Left cardiac atrium (tissue), 4 donors: ENCODE measurements at regions of chr14 and their contacts with region 1.

Region 1: DNA sequence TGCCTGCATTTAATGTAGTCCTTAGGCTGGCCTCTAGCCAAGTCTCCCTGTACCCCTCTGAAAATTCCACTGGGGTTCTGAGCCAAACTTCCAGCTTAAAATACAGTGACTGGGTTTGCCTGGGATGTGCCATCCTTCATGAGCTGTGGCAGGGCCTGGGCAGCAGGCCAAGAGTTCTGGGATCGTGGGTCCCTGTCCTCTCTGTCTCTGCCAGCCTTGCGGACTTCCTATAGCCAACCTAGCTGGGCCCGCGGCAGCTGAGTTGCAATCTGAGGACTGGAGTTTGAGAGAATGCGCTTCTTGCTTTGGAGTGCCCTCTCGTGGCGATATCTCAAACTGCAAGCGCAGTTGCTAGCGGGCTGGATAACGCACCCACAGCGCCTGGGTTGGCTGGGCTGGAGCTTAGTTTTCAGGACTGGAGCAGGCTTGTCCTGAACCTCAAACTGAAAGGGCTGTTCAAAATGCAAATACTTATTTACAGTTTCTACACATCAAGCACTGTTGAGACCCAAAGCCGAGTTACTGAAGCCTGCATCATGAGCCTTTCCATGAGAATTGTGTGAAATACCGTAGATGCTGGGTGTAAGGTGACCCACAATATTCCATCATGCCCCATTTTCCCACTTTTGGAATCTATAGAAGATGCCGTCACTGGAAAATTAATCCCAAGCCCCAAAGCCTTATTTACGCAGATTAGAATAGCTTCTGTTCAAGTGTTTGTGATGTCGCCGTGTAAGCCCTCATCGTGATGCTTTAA is 7.3 kb upstream of the IFI27L2 start:
- DNase-seq: peak; percentile 90
- ATAC-seq: peak; percentile 93 to 96

Region 2: DNA sequence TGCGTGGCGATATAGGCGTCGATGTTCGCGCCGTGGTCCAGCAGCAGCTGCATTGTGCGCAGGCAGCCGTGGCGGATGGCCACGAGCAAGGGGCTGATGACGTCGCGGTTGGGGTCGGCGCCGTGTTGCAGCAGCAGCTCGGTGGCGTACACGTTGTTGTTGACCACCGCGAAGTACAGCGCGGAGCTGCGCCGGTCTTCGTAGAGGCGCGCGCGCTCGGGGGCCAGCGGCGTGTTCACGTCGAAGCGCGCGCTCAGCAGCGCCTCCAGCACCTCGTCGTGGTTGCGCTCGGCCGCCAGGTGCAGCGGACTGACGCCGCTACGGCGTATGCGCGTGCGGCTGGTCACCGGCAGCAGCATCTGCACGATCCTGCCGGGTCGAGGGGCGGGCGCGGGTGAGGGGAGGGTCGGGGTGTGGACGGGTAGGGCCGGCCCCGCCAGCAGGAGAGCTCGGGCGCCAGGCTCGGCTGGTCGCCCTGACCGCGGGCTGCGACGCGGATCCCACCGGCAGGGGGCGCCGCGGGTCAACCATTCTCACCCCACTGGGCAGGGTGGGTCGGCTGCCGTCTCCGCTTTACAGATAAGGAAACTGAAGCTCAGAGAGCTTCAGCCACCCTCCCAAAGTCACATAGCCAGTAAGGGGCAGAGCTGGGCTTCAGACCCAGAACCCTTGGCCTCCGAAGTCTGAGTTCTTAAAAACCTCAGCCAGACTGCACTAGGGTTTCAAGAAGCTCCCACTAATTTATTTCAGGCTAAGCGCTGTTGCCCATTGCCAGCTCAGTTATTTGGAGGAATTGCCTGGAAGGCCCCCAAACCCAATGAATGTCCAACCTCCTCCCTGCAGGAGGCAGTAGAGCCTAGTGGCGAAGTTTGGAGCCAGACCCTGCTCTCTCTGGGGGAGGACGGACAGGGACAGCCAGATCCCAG is 197.2 kb before region 1 on chr14:
- intact Hi-C with region 1: loop called in 1 of 2 experiments (anchors 10 kb)
- DNase-seq: peak; percentile 78
- ATAC-seq: peak; percentile 83 to 85

Region 3: GRCh38 chr14:94036313-94037050 is 100.3 kb before region 1 on chr14:
- intact Hi-C with region 1: loop called (anchors 1 to 5 kb)
- DNase-seq: peak; percentile 73
- ATAC-seq: peak; percentile 90 to 92

Region 4: DNA sequence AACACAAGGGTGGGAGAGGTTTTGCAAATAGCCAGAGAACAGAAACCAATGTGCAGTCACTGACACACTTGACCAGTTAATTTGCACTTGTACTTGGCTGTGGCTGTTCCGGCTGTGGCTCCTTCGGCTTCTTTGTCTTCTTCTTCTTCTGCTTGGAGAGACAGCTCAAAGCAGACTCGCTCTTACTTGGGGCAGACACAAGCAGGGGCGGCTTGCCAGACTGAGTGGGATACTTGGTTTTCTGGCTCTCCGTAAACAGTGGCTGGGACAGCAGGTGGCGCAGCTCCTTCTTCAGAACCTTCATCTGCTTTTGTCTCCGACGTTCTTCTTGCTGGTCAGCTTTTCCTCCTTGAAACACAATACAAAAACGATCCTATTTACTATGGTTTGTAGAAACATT is 85.6 kb before region 1 on chr14:
- intact Hi-C with region 1: loop called in 1 of 2 experiments (anchors 2 kb)
- DNase-seq: peak; percentile 58
- ATAC-seq: peak; percentile 38 to 45

Region 5: GRCh38 chr14:94173885-94174603 is 37.3 kb after region 1 on chr14 and contains the start of gene PPP4R4:
- intact Hi-C with region 1: loop called in 1 of 2 experiments (anchors 5 kb)
- DNase-seq: peak; percentile 89
- ATAC-seq: peak; percentile 95 to 97
- total RNA-seq, gene PPP4R4: 0.18 to 0.29 TPM

Region 6: DNA sequence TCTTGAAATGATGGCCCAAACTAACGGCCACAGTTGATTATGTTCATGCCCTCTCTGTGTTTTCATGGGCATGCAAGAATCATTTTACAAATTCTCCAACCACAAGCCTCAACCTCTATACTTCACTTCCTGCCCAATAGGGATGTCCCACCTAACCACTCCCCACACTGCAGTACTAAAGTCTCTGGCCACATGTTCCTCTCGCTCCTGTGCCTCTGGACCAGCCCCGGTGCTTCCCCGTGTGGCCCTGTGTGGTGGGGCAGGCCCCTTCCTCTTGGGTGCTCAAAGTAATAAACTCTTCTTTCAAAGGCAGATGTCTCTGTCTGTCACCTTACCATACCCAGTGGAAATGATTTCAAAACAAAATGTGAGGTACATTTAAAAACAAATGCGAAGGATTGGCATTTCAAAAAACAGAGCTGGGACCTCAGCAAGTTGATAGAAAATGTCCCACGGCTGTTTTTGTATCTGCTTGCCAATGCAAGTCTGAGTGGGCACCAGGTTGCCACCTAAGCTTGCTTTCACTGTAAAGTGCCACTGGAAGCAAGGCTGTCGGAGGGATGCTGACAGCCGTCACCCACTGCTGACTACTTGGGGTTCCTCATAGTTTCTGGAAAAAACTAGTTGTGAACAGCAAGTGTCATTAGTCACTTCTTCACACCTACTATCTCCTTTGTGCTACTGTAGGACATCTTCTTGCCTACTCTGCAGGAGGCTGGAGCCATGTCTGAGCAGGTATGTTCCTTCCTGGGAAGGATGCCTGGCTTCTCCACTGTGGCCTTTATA is 324.1 kb after region 1 on chr14:
- intact Hi-C with region 1: no loop called
- DNase-seq: no peak
- ATAC-seq: no peak